SK-N-SH (cell line): ENCODE measurements at regions of chr16 and their contacts with region 1.

Region 1: GRCh38 chr16:67246934-67247697 is at the start of gene FHOD1:
- DNase-seq: peak; percentile 93
- H3K4me3 ChIP-seq: peak within 1 kb of the TSS; percentile 92 to 95
- H3K27ac ChIP-seq: peak within 1 kb of the TSS; percentile 96
- H3K4me1 ChIP-seq: peaks cover 42 to 46% of the 10 kb centered on the region in 2 experiments
- H3K27me3 ChIP-seq: no peaks in the 10 kb centered on the region
- CTCF ChIP-seq: no peak
- EP300 ChIP-seq: no peak
- RAD21 ChIP-seq: no peak
- polyA plus RNA-seq, gene FHOD1: 53.2 and 70.9 TPM in 2 replicates

Region 2: DNA sequence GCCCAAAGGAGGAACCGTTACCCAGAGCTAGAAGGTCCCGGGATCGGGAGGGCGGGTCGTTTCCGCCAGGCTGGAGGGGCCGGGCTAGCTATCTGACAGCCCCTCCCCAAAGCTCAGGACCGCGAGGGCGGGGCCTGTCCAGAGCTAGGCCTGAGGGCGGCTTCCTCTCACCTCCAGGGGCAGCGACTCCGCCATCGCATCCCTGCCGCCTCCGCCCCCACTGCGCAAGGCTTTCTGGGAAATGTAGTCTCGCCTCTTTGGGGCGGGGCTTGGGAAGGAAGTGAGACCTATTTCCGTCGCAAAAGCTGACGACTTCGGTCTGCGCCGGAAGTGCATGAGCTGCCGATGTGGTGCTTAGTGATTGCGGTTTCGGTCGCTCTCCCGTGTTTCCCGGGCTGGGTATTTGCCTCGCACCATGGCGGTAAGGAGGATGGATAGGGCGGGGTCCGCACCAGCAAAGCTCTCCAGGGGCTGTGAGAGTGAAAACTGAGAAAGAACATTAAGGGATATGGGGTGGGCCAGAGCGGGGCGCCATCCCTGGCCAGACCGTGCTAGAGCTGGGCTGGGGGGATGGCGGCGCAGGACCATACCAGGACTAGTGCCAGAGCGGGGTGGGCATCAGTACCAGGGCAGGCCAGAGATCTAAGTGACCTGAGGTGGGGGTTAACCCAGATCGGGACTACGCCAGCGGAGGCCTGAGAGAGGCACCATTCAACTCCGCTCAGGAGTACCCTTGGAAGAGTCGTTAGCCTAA is 20.1 kb before region 1 on chr16 and contains the start of gene TMEM208:
- CTCF ChIA-PET with region 1: interaction called, 6 read pairs
- POLR2A ChIA-PET with region 1: interaction called, 14 read pairs
- DNase-seq: peak; percentile 97
- H3K4me3 ChIP-seq: peak within 1 kb of the TSS; percentile 92 to 100
- H3K27ac ChIP-seq: peak within 1 kb of the TSS; percentile 72 to 83
- H3K4me1 ChIP-seq: peaks cover 0 to 22% of the 10 kb centered on the region in 2 experiments; a peak in 2 of 4 replicates
- H3K27me3 ChIP-seq: no peaks in the 10 kb centered on the region
- CTCF ChIP-seq: peak; percentile 48
- EP300 ChIP-seq: no peak
- RAD21 ChIP-seq: no peak
- polyA plus RNA-seq, gene TMEM208: 98.2 and 130 TPM in 2 replicates